AG04449 (cell line): ENCODE measurements at regions of chr19 and their contacts with region 1.

Region 1: DNA sequence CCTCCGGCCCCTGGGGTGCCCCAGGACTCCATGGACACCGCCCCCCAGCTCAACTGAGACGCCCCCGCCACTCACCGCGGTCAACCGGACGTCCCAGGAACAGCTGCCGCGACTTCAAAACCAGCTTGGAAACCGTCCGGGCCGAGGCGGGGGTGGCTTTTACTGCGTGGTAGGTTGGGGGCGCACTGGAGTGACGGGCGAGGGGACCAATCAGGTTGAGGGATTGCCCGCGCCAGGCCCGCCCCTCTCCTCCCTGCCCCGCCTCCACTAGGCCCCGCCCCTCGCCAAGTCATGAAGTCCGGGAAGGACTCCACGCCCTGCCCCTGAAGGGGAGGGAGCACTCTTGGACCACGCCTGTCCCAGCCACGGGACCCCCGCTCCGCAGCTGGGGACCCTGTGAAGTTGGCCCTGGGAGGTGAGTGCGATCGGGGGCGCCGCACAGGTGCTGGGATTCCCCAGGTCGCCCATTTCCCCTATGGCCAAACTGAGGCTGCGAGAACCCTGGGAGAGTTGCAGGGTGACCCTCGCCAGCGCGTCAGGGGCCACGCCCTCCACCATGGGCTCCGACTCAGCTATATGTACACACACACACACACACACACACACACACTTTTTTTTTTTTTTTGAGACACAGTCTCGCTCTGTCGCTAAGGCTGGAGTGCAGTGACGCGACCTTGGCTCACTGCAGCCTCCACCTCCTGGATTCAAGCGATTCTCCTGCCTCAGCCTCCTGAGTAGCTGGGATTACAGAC is at the start of gene PLIN3:
- DNase-seq: peak; percentile 59
- H3K4me3 ChIP-seq: peak within 1 kb of the TSS; percentile 88
- CTCF ChIP-seq: no peak

Region 2: GRCh38 chr19:4844348-4845179 is 23.1 kb before region 1 on chr19:
- CTCF ChIA-PET with region 1: interaction called, 122 read pairs
- POLR2A ChIA-PET with region 1: interaction called, 18 read pairs
- DNase-seq: no peak
- H3K4me3 ChIP-seq: no peak overlapping the region
- CTCF ChIP-seq: no peak

Region 3: GRCh38 chr19:4851551-4852290 is 16.0 kb before region 1 on chr19:
- CTCF ChIA-PET with region 1: interaction called, 122 read pairs
- POLR2A ChIA-PET with region 1: interaction called, 19 read pairs
- DNase-seq: no peak
- H3K4me3 ChIP-seq: no peak overlapping the region
- CTCF ChIP-seq: peak; percentile 89

Region 4: GRCh38 chr19:4933528-4933927 is 65.8 kb after region 1 on chr19:
- CTCF ChIA-PET with region 1: no interaction called
- POLR2A ChIA-PET with region 1: no interaction called
- DNase-seq: no peak
- H3K4me3 ChIP-seq: no peak overlapping the region
- CTCF ChIP-seq: no peak

Region 5: GRCh38 chr19:5038631-5039271 is 171.0 kb after region 1 on chr19:
- CTCF ChIA-PET with region 1: interaction called, 88 read pairs
- POLR2A ChIA-PET with region 1: interaction called, 3 read pairs
- DNase-seq: no peak
- H3K4me3 ChIP-seq: no peak overlapping the region
- CTCF ChIP-seq: peak; percentile 60